ENCODE measurements at regions of chr10 and their contacts with region 1.

Region 1: DNA sequence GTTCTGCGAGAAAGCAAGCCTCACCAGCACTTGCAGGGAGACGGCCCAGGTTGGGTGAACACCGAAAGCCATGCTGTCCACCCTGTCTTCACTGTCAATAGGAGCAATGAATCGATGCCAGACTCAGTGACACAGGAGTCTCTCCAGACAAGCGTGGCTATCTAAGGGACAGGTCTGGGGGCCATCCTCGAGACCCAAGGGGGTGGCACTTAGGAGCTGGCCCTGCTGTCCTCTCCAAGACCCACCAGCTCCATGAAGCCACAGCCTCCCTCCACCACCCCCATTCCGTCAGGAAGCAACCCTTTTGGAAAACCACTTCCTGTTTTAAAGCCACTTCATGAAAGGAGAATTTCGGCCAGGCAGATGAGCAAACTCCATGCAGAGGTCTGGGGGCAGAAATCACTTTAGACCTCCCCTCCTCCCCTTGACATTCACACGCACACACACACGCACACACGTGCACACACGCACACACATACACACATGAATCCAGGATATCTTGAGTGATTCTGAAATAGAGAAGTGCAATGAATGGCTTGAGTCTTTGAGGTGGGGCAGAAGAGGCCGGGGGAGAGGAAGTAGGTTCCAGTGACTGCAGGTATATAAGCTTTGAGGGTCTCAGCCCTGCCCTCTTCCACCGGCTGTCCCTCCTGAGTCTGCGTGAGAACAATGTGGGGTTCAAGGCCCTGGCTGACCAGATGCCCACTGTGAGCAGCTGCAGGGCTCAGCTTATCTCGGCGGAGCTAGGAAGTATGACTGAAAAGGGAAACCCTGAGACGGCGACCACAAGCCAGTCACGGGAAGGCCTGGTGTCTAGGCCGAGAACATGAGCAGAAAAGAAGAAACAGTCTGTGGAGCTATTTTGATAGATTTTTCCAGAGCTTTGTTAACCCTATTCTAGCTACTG is 25.0 kb downstream of the RGS10 start:
- DNase-seq: peak; percentile 86
- ATAC-seq: peak; percentile 66
- H3K4me3 Mint-ChIP-seq: peak overlapping the region; percentile 51
- H3K27ac Mint-ChIP-seq: peak overlapping the region; percentile 98
- H3K4me1 Mint-ChIP-seq: peaks cover 57% of the 10 kb centered on the region
- H3K27me3 Mint-ChIP-seq: no peaks in the 10 kb centered on the region

Region 2: GRCh38 chr10:119496273-119496672 is 21.2 kb before region 1 on chr10:
- CTCF ChIA-PET with region 1: interaction called, 12 read pairs
- POLR2A ChIA-PET with region 1: interaction called, 3 read pairs
- intact Hi-C with region 1: no loop called
- DNase-seq: peak; percentile 83
- ATAC-seq: peak; percentile 74
- H3K4me3 Mint-ChIP-seq: no peak overlapping the region
- H3K27ac Mint-ChIP-seq: peak overlapping the region; percentile 75
- H3K4me1 Mint-ChIP-seq: peaks cover 86% of the 10 kb centered on the region
- H3K27me3 Mint-ChIP-seq: no peaks in the 10 kb centered on the region

Region 3: GRCh38 chr10:119502209-119502608 is 15.3 kb before region 1 on chr10:
- CTCF ChIA-PET with region 1: interaction called, 12 read pairs
- POLR2A ChIA-PET with region 1: interaction called, 4 read pairs
- intact Hi-C with region 1: loop called (anchors 1 kb)
- DNase-seq: peak; percentile 87
- ATAC-seq: peak; percentile 78
- H3K4me3 Mint-ChIP-seq: peak overlapping the region; percentile 56
- H3K27ac Mint-ChIP-seq: peak overlapping the region; percentile 98
- H3K4me1 Mint-ChIP-seq: peaks cover 96% of the 10 kb centered on the region
- H3K27me3 Mint-ChIP-seq: no peaks in the 10 kb centered on the region

Region 4: DNA sequence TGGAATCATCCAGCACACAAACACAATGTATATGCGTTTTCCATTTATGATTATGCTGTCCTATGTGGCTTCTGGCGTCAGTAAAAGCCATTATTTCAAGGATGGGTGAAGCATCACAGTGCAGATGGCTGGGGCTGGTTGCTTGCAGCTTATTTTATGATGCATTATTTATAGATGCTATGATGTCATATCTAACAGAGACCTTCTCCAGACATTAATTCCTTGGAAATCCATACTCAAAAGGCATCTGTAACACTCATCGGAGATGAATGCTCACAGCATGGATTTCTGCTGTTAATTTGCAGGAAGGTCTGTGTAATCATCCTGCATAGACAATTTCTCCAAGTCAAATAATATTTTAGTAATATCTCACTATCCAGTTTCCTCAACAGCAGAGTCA is 17.8 kb after region 1 on chr10:
- CTCF ChIA-PET with region 1: interaction called, 12 read pairs
- POLR2A ChIA-PET with region 1: interaction called, 4 read pairs
- intact Hi-C with region 1: no loop called
- DNase-seq: no peak
- ATAC-seq: no peak
- H3K4me3 Mint-ChIP-seq: peak overlapping the region; percentile 8
- H3K27ac Mint-ChIP-seq: peak overlapping the region; percentile 87
- H3K4me1 Mint-ChIP-seq: peaks cover 87% of the 10 kb centered on the region
- H3K27me3 Mint-ChIP-seq: no peaks in the 10 kb centered on the region